H1 (cell line): ENCODE measurements at regions of chr20 and their contacts with region 1.

Region 1: GRCh38 chr20:37984018-37984785 is 49.1 kb downstream of the TTI1 start:
- DNase-seq: no peak
- H3K4me3 ChIP-seq: no peak overlapping the region
- H3K27ac ChIP-seq: no peak overlapping the region
- H3K4me1 ChIP-seq: no peaks in the 10 kb centered on the region
- H3K27me3 ChIP-seq: no peaks in the 10 kb centered on the region
- CTCF ChIP-seq: no peak
- EP300 ChIP-seq: no peak
- POLR2A ChIP-seq: 0 out of 3 replicates have a peak, but pooled peaks of 1 of the 2 experiments have one; percentile 36
- RAD21 ChIP-seq: no peak

Region 2: GRCh38 chr20:37901654-37902503 is 82.3 kb before region 1 on chr20:
- CTCF ChIA-PET with region 1: interaction called, 10 read pairs
- POLR2A ChIA-PET with region 1: interaction called, 4 read pairs
- DNase-seq: peak in 1 of 2 experiments; percentile 70
- H3K4me3 ChIP-seq: peak overlapping the region in 2 of 4 experiments; percentile 8 to 69; a peak in 4 of 8 replicates
- H3K27ac ChIP-seq: no peak overlapping the region
- H3K4me1 ChIP-seq: peaks cover 6 to 17% (median 11%) of the 10 kb centered on the region in 4 experiments
- H3K27me3 ChIP-seq: no peaks in the 10 kb centered on the region; a peak in 2 of 7 replicates
- CTCF ChIP-seq: peak; percentile 64 to 81 (median 79)
- EP300 ChIP-seq: no peak
- POLR2A ChIP-seq: no peak
- RAD21 ChIP-seq: peak; percentile 79 to 90

Region 3: GRCh38 chr20:37915800-37916570 is 68.2 kb before region 1 on chr20:
- CTCF ChIA-PET with region 1: interaction called, 21 read pairs
- POLR2A ChIA-PET with region 1: interaction called, 4 read pairs
- DNase-seq: peak in 1 of 2 experiments; percentile 77
- H3K4me3 ChIP-seq: peak overlapping the region; percentile 31 to 60 (median 38); a peak in 7 of 8 replicates
- H3K27ac ChIP-seq: no peak overlapping the region
- H3K4me1 ChIP-seq: peaks cover 6 to 39% (median 21%) of the 10 kb centered on the region in 4 experiments
- H3K27me3 ChIP-seq: no peaks in the 10 kb centered on the region; a peak in 3 of 7 replicates
- CTCF ChIP-seq: peak; percentile 38 to 55 (median 52)
- EP300 ChIP-seq: no peak
- POLR2A ChIP-seq: no peak
- RAD21 ChIP-seq: peak in 1 of 2 experiments; percentile 27; a peak in 1 of 4 replicates

Region 4: DNA sequence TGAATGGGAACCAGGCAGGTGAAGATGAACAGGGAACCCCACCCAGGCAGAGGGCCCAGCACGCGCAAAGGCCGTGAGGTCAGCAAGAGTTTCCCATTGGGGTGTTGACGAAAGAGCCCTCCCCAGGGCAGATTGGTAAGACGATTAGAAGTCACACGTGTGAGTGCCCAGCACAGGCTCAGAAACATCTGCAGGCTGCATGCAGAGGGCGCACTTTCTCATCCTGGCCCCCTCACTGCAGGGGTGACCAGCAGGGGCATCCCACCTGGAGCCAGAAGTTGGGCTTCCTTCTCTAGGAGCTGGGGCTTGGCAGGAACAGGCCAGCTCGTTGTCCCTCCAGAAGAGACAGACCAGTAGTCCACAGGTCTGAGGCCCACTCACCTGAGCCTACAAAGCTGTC is 42.9 kb before region 1 on chr20:
- CTCF ChIA-PET with region 1: interaction called, 10 read pairs
- POLR2A ChIA-PET with region 1: interaction called, 4 read pairs
- DNase-seq: peak in 1 of 2 experiments; percentile 57
- H3K4me3 ChIP-seq: no peak overlapping the region
- H3K27ac ChIP-seq: no peak overlapping the region
- H3K4me1 ChIP-seq: 0 out of 7 replicates have a peak, but pooled peaks cover 0 to 4% (median 0%) of the 10 kb centered on the region in 4 experiments
- H3K27me3 ChIP-seq: no peaks in the 10 kb centered on the region
- CTCF ChIP-seq: peak; percentile 67 to 87 (median 72)
- EP300 ChIP-seq: no peak
- POLR2A ChIP-seq: no peak
- RAD21 ChIP-seq: peak; percentile 28 to 43; a peak in 3 of 4 replicates

Region 5: DNA sequence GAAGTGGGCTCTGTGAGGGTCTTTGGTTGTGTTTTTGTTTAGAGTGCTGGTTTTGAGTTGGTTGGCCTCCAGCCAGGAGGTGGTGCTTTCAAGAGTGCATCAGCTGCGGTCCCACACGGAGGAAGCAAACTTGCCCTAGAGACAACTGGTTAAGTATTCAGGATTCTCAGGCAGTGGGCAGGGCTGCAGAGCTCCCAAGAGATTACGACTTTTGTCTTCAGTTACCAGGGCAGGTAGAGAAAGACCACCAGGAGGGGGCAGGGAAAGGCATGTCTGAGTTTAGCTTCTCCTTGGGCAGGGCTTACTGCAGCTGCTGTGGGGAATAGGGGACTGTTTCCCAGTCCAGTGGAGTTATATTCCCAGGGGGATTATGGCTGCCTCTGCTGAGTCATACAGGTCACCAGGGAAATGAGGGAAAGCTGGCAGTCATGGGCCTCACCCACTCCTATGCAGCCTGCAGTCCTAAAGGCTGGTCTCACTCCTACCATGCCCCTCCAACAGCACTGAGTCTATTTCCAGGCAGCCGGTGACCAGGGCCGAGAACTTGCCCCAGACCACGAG is 15.3 kb before region 1 on chr20:
- CTCF ChIA-PET with region 1: interaction called, 19 read pairs
- POLR2A ChIA-PET with region 1: no interaction called
- DNase-seq: peak in 1 of 2 experiments; percentile 51
- H3K4me3 ChIP-seq: no peak overlapping the region; a peak in 1 of 8 replicates
- H3K27ac ChIP-seq: no peak overlapping the region
- H3K4me1 ChIP-seq: peaks cover 0 to 17% (median 4%) of the 10 kb centered on the region in 4 experiments; a peak in 5 of 7 replicates
- H3K27me3 ChIP-seq: peaks cover 0 to 11% (median 2%) of the 10 kb centered on the region in 4 experiments; a peak in 2 of 7 replicates
- CTCF ChIP-seq: peak in 1 of 3 experiments; percentile 7; a peak in 2 of 4 replicates
- EP300 ChIP-seq: no peak
- POLR2A ChIP-seq: no peak
- RAD21 ChIP-seq: no peak